ENCODE measurements at regions of chr17 and their contacts with region 1.

Region 1: GRCh38 chr17:56185905-56186783 is 32.9 kb downstream of the ANKFN1 start:
- DNase-seq: no peak
- H3K4me3 ChIP-seq: no peak overlapping the region
- H3K27ac ChIP-seq: no peak overlapping the region
- H3K4me1 ChIP-seq: no peaks in the 10 kb centered on the region
- H3K27me3 ChIP-seq: no peaks in the 10 kb centered on the region
- CTCF ChIP-seq: no peak
- EP300 ChIP-seq: no peak
- POLR2A ChIP-seq: no peak

Region 2: DNA sequence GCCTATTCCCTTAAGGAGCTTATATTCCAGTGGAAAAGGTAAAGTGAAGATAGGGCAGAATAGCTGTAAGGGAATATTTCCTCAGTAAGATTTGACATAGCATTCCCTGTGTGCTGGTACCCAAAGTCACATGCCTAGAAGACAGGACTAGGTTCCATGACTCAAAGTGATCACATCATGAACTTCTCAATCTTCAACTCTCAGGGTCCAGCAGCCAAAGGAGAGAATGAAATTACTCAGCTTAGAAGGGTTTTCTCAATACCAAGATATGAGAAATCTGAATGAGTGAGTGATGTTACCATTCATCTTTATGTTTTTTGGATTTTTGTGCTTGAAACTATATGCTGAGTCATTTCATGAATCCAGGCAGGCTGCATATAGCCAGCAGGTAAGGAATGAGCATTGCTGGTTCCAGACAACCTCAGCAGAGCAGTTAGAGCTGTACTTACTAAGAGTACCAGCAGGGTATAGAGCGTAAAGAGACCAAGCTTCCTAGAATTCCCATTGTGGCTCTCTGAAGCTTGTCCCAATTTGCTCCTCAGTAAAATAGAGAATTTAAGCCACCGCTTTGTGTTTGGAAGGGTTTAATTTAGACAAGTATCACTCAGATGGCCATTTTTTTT is 58.2 kb after region 1 on chr17:
- in situ Hi-C with region 1: loop called in 1 of 4 experiments (anchors 10 kb)
- intact Hi-C with region 1: no loop called
- DNase-seq: no peak
- H3K4me3 ChIP-seq: no peak overlapping the region
- H3K27ac ChIP-seq: no peak overlapping the region
- H3K4me1 ChIP-seq: no peaks in the 10 kb centered on the region
- H3K27me3 ChIP-seq: no peaks in the 10 kb centered on the region
- CTCF ChIP-seq: no peak
- EP300 ChIP-seq: no peak
- POLR2A ChIP-seq: no peak

Measured in transverse colon (tissue), 4 donors.